Activated T-helper 1 cell treated with anti-CD3 and anti-CD28 coated beads, Interleukin-12 subunit alpha, Interleukin-12 subunit beta, Interleukin-2, Interleukin-4 antibody, amounts not matched to agents 30 ng/mL and 10 ng/mL and 1 ng/mL, durations not matched to agents 14 hours and 24 hours and 36 hours (primary cell): ENCODE measurements at regions of chr2 and their contacts with region 1.

Region 1: DNA sequence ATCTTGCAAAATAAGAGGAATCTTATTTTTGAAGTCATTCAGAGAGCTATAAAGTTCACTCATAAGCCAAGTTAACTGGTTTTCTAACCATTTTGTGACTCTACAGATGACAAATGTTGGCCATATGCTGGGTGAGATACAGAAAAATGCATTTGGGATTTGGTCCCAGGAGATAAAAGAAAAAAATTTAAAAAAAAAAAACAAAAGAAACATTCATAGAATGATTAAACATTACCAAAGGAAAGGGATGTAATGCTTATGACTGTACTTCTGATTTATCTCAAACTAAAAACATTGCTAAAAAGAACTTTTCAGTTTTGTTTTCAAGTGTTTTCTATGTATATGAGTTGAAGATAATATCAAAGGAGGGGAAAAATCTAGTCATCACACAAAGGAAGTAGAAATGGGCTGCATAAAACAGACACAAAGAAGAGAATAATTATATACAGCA is 43.1 kb downstream of the PELI1 start:
- DNase-seq: no peak
- H3K4me3 Mint-ChIP-seq: no peak overlapping the region
- H3K27ac Mint-ChIP-seq: peak overlapping the region; percentile 76
- H3K4me1 Mint-ChIP-seq: peaks cover 54% of the 10 kb centered on the region
- H3K27me3 Mint-ChIP-seq: no peaks in the 10 kb centered on the region

Region 2: DNA sequence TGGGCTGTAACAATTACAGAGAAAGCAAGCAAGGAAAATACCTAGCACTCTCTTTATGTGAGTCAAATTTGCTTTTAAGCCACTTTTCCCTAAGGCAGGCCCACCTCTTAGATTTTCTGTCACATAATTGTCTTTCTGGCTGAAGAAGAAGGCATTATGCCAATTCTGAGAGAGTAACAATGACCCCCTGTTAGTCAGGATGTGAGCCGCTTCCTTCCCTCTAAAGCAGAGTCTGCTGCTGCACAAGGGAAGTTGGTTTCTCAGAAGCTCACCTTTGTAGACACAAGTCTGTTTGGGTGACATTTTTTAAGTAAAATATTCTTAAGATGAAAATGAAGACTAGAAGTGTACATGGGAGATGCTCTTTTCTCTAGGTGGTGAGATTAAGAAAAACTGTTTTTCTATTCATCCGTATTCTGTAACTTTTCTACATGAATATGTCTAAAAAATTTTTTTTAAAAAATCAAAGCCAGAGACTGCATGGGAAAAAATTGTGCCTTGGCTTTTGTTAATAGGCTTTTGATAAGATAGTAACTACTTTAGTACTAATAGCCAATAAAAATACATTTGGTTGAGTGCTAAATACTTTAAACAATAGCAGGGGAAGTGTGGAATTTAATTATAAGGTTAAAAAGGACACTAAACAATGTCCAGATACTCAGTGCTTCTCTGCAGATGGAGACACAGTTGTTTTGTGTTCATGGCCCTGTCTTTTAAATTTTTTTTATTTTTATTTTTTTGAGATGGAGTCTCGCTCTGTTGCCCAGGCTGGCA is 48.5 kb before region 1 on chr2:
- intact Hi-C with region 1: loop called (anchors 1 kb)
- DNase-seq: no peak
- H3K4me3 Mint-ChIP-seq: no peak overlapping the region
- H3K27ac Mint-ChIP-seq: no peak overlapping the region
- H3K4me1 Mint-ChIP-seq: peaks cover 40% of the 10 kb centered on the region
- H3K27me3 Mint-ChIP-seq: no peaks in the 10 kb centered on the region

Region 3: GRCh38 chr2:64133828-64134227 is 32.7 kb after region 1 on chr2:
- intact Hi-C with region 1: loop called (anchors 1 kb)
- DNase-seq: no peak
- H3K4me3 Mint-ChIP-seq: peak overlapping the region; percentile 39
- H3K27ac Mint-ChIP-seq: peak overlapping the region; percentile 88
- H3K4me1 Mint-ChIP-seq: peaks cover 90% of the 10 kb centered on the region
- H3K27me3 Mint-ChIP-seq: no peaks in the 10 kb centered on the region

Region 4: GRCh38 chr2:64165706-64166105 is 64.5 kb after region 1 on chr2:
- intact Hi-C with region 1: loop called (anchors 1 kb)
- DNase-seq: no peak
- H3K4me3 Mint-ChIP-seq: no peak overlapping the region
- H3K27ac Mint-ChIP-seq: no peak overlapping the region
- H3K4me1 Mint-ChIP-seq: no peaks in the 10 kb centered on the region
- H3K27me3 Mint-ChIP-seq: no peaks in the 10 kb centered on the region

Region 5: DNA sequence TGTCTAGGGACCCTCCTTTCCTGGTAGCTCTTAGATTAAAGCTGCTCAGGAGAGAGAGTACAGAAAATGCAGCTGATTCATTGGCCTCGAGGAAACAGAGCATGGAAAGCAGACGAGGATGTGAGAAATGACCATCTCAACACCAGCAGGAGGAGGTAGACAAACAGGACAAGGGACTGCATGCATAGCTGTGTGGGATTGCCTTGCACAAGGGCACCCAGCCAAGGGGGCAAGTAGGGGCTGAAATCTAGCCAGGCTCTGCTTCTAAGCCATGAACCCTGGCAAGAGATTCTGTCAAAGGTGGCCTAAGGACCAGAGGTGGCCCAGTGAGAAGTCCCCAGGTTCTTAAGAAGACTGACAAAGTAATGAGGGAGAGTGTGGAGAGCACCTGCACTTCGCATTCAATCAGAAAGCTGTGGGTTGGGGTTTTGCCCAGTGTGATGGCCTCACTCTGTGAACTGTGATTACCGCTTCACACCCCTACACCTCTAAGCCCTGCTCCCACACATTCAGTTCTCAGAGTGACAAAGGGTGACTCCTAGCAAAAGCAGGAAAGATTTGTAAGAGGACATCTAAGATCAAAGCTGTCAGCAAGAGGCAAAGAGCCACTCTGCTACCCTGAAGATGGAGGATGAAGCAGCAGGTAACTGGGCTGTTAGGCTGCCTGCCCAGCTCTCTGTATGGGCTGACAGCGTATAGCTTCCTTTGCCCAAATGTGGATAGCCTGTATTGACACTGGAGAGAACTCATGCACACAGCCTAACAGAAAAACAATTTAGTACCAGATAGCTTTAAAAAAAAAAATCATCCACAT is 194.4 kb after region 1 on chr2:
- intact Hi-C with region 1: loop called (anchors 1 kb)
- DNase-seq: peak; percentile 23
- H3K4me3 Mint-ChIP-seq: no peak overlapping the region
- H3K27ac Mint-ChIP-seq: peak overlapping the region; percentile 59
- H3K4me1 Mint-ChIP-seq: peaks cover 34% of the 10 kb centered on the region
- H3K27me3 Mint-ChIP-seq: peaks cover 12% of the 10 kb centered on the region